ENCODE measurements at regions of chrX and their contacts with region 1.

Region 1: GRCh38 chrX:153494541-153495361 is at the start of gene BGN:
- DNase-seq: peak; percentile 68
- H3K4me3 ChIP-seq: peak within 1 kb of the TSS; percentile 39; a peak in 2 of 4 replicates
- H3K27ac ChIP-seq: no peak within 1 kb of the TSS; a peak in 1 of 4 replicates
- H3K4me1 ChIP-seq: peaks cover 8 to 51% of the 10 kb centered on the region in 2 experiments; a peak in 1 of 4 replicates
- H3K27me3 ChIP-seq: no peaks in the 10 kb centered on the region
- CTCF ChIP-seq: peak; percentile 57
- EP300 ChIP-seq: no peak
- RAD21 ChIP-seq: peak; percentile 51
- polyA plus RNA-seq, gene BGN: 15.2 and 28.9 TPM in 2 replicates

Region 2: DNA sequence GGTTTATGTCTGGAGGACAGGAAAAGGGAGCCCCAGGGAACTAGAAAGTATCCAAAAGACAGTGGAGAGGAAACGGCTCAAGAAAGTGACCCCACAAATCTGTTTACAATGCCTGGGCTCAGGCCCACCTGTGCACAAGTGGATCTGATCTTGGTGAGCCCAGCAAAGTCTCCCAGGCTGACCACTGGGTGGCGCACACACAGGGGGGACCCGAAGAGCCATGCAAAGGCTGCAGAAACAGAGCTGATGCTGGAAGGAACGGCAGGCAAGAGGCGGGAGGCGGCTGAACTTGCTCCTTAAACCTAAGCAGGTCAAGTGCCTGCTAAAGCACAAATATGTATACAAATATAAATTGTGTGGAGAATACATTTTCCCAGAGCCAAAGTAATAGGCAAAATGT is 33.9 kb before region 1 on chrX:
- CTCF ChIA-PET with region 1: interaction called, 12 read pairs
- POLR2A ChIA-PET with region 1: no interaction called
- DNase-seq: peak; percentile 83
- H3K4me3 ChIP-seq: no peak overlapping the region
- H3K27ac ChIP-seq: no peak overlapping the region
- H3K4me1 ChIP-seq: peaks cover 0 to 14% of the 10 kb centered on the region in 2 experiments; a peak in 1 of 4 replicates
- H3K27me3 ChIP-seq: no peaks in the 10 kb centered on the region; the same call in 1 of the 2 replicates
- CTCF ChIP-seq: peak; percentile 86
- EP300 ChIP-seq: no peak
- RAD21 ChIP-seq: peak; percentile 58

Region 3: GRCh38 chrX:153470435-153471363 is 24.1 kb before region 1 on chrX and contains the start of gene HAUS7:
- CTCF ChIA-PET with region 1: interaction called, 70 read pairs
- POLR2A ChIA-PET with region 1: interaction called, 3 read pairs
- DNase-seq: peak; percentile 95
- H3K4me3 ChIP-seq: peak within 1 kb of the TSS; percentile 65 to 73
- H3K27ac ChIP-seq: peak within 1 kb of the TSS in 1 of 2 experiments; percentile 24; a peak in 2 of 4 replicates
- H3K4me1 ChIP-seq: peaks cover 0 to 16% of the 10 kb centered on the region in 2 experiments; a peak in 1 of 4 replicates
- H3K27me3 ChIP-seq: no peaks in the 10 kb centered on the region
- CTCF ChIP-seq: peak; percentile 76
- EP300 ChIP-seq: no peak
- RAD21 ChIP-seq: peak; percentile 83
- polyA plus RNA-seq, gene HAUS7: 27.1 and 39.7 TPM in 2 replicates

Region 4: DNA sequence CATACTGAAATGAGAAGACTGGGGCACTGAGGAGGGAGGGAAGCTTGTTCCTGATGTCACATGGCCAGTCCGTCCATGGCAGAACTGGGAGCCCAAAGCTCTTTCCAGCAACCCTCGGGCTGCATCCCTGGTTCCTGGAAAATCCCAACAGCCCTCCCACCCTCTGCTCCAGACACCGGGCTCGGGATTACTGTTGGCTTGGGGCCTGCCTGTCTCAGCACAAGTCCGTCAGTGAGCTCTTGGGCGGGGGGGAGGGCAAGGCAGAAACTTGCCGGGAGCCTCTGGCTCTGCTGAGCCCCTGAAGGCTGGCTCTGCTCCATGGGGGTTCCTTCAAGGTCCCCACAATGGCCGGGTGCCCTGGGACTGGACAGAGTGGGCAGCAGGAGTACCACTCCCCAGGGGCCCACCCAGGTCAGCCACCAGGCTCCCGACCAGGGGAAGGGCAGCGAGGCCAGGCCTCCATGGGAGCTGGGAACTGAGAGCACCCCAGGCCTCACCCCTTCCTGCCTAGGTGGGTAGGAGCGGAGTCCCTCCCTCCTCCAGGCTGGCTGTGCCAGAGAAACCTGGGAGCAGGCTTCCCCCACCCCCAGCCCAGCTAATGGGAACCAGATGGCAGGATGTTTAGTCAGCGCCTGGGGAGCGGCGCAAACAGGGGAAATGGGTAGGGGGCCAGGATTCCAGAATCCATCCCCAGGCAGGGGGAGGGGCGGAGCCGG is 17.9 kb before region 1 on chrX:
- CTCF ChIA-PET with region 1: interaction called, 70 read pairs
- POLR2A ChIA-PET with region 1: interaction called, 13 read pairs
- DNase-seq: peak; percentile 89
- H3K4me3 ChIP-seq: no peak overlapping the region
- H3K27ac ChIP-seq: peak overlapping the region; percentile 72 to 94
- H3K4me1 ChIP-seq: peaks cover 21 to 41% of the 10 kb centered on the region in 2 experiments; a peak in 3 of 4 replicates
- H3K27me3 ChIP-seq: no peaks in the 10 kb centered on the region
- CTCF ChIP-seq: no peak
- EP300 ChIP-seq: peak; percentile 24 to 89
- RAD21 ChIP-seq: no peak

Measured in SK-N-SH (cell line).